ENCODE measurements at regions of chr10 and their contacts with region 1.

Region 1: DNA sequence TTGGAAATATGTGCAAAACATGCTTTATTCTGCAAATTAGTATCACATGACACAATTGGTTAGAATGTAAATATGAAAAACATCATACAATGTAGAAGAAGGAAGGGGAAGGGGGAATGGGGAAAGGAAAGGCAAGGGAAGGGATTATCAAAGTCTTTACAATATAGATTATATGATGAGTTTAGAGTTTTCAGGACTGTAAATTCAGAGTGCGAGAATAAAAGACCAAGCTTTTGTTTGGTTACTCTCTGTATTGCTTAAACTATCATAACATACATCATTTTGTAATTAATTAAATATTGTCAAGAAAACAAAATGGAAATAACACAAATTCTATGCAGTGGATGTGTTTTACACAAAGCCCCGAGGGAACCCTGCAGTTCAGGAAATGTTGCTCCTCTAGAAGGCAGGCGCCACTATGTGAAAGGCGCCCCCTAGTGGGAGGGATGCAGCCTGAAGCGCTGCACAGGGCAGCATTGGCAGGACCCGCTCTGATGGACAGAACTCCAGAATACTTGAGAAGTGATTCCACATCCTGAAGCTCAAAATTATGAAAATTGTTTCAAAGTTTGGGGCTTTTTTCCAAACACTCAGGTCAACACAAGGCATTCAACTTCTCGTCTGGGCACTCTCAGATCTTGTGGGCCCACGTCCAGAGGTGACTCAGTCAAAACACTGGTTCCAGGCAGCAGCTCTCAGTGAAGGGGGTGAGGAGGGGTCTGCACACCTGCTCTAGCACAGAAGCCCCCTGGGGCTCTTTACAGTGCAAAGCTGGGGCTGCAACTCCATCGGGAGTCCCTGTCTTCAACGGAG is 31.6 kb upstream of the TMEM254 start:
- DNase-seq: peak; percentile 78
- H3K4me3 Mint-ChIP-seq: no peak overlapping the region
- H3K27ac Mint-ChIP-seq: no peak overlapping the region
- H3K4me1 Mint-ChIP-seq: no peaks in the 10 kb centered on the region
- H3K27me3 Mint-ChIP-seq: no peaks in the 10 kb centered on the region

Region 2: GRCh38 chr10:80025281-80025680 is 21.6 kb before region 1 on chr10:
- CTCF ChIA-PET with region 1: interaction called, 10 read pairs
- POLR2A ChIA-PET with region 1: no interaction called
- intact Hi-C with region 1: no loop called
- DNase-seq: no peak
- H3K4me3 Mint-ChIP-seq: no peak overlapping the region
- H3K27ac Mint-ChIP-seq: no peak overlapping the region
- H3K4me1 Mint-ChIP-seq: no peaks in the 10 kb centered on the region
- H3K27me3 Mint-ChIP-seq: peaks cover 2% of the 10 kb centered on the region

Region 3: GRCh38 chr10:80064120-80064886 is 17.5 kb after region 1 on chr10:
- CTCF ChIA-PET with region 1: interaction called, 15 read pairs
- POLR2A ChIA-PET with region 1: no interaction called
- intact Hi-C with region 1: no loop called
- DNase-seq: no peak
- H3K4me3 Mint-ChIP-seq: no peak overlapping the region
- H3K27ac Mint-ChIP-seq: no peak overlapping the region
- H3K4me1 Mint-ChIP-seq: no peaks in the 10 kb centered on the region
- H3K27me3 Mint-ChIP-seq: peaks cover 3% of the 10 kb centered on the region